GM13976 (cell line): ENCODE measurements at regions of chr4 and their contacts with region 1.

Region 1: GRCh38 chr4:146916479-146917076 is 29.1 kb downstream of the TTC29 start:
- DNase-seq: peak; percentile 6
- CTCF ChIP-seq: peak; percentile 44

Region 2: GRCh38 chr4:146235654-146236177 is 680.9 kb before region 1 on chr4:
- in situ Hi-C with region 1: loop called (anchors 10 kb)
- DNase-seq: no peak
- CTCF ChIP-seq: no peak

Region 3: DNA sequence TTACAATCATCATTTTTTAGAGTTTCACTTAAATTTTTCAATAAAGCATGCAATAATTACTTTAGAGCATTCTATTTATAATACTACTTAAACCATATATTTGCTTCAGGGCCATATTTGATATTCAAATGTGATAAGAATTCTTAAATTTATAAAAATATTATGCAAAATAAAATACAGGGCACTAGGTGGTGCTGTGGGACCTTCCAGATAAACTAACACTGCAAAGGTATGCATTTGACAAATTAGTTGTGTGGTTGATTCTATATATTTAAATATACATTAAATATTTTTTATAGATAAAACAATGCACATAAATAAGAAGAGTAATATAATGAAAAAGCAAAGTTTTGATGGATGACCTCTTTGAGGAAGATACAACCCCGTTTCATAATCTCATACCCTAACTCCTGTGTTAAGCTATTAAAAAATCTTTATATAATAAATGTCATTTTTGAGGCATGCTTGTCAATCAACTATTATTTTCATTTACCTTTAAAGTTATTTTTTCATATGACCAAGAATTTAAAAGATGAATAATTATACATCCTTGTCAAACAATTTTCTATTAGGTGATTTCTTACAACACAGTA is 573.9 kb before region 1 on chr4:
- in situ Hi-C with region 1: loop called (anchors 5 kb)
- DNase-seq: no peak
- CTCF ChIP-seq: no peak

Region 4: DNA sequence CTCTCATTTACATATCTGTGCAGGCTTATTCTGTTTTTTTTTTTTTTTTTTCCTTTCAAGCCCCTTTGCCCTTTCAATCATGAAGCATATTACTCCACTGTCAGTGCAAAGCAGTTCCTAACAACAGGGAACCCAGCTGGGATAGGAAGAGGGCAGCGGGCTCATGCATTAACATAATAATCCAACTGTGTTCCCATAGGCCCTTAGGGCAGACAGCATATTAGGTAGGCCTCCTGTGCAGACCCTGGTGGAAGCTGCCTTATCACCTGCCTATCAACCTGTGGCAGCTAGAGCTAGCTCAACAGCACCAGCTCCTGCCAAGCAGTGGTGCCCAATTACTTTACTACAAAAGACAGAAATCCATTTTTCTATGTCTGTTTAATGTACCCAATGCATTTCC is 444.2 kb before region 1 on chr4:
- in situ Hi-C with region 1: no loop called
- DNase-seq: no peak
- CTCF ChIP-seq: no peak